ENCODE measurements at regions of chr12 and their contacts with region 1.

Region 1: GRCh38 chr12:6426882-6427671 is 17.7 kb upstream of the CD27 start:
- DNase-seq: no peak
- H3K4me3 ChIP-seq: no peak overlapping the region
- H3K27ac ChIP-seq: peak overlapping the region in 2 of 4 donors; percentile 38 to 47
- H3K4me1 ChIP-seq: peaks cover 20 to 30% (median 22%) of the 10 kb centered on the region in 3 donors
- H3K27me3 ChIP-seq: no peaks in the 10 kb centered on the region
- CTCF ChIP-seq: no peak
- POLR2A ChIP-seq: no peak

Region 2: GRCh38 chr12:6182116-6182898 is 244.8 kb before region 1 on chr12:
- intact Hi-C with region 1: no loop called
- DNase-seq: no peak
- H3K4me3 ChIP-seq: peak overlapping the region in 1 of 4 donors; percentile 27
- H3K27ac ChIP-seq: peak overlapping the region; percentile 82 to 91 (median 90)
- H3K4me1 ChIP-seq: peaks cover 33 to 75% (median 51%) of the 10 kb centered on the region in 3 donors
- H3K27me3 ChIP-seq: no peaks in the 10 kb centered on the region
- CTCF ChIP-seq: no peak
- POLR2A ChIP-seq: no peak

Region 3: DNA sequence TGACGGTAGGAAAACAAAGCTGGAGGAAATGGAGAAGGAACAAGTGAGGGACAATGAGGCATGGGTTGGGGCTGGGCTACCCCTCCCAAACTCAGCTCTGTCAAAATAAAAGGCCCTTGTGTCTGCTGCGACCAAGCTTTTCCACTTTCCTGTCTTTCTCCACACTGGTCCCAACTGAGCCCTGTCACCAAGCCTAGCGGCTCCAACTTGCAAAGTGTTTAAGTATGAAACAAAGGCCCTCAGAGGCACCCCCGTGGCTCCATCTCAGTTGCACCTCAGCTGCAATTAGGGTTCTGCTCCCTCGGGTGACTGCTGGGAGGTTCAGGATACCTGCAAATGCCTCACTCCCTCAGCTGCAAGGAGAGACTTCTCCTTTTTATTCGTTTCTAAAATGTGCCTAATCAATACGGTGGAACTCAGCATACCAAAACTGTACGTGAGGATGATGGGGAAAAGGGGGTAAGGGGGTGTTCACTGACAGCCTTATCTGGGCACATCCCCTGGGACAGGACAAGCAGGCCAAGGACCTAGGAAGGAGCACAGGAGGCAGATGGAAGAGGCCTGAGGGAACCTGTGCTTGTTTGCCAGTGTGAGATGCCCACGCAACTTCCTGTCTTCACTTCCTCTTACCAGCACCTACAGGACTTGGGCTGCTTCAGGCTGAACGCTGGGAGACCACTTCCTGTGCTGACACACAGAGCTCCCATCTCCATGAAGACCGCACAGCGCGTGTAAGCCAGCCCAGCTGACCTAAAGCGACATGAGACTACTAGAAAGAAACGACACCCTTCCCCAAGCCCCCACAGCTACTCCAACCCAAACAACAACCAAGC is 34.5 kb after region 1 on chr12:
- intact Hi-C with region 1: loop called (anchors 5 kb)
- DNase-seq: peak; percentile 65
- H3K4me3 ChIP-seq: no peak overlapping the region
- H3K27ac ChIP-seq: peak overlapping the region; percentile 1 to 81 (median 51)
- H3K4me1 ChIP-seq: peaks cover 0 to 55% (median 21%) of the 10 kb centered on the region in 3 donors
- H3K27me3 ChIP-seq: no peaks in the 10 kb centered on the region
- CTCF ChIP-seq: no peak
- POLR2A ChIP-seq: no peak

Region 4: GRCh38 chr12:6533923-6534694 is 107.0 kb after region 1 on chr12 and contains the start of gene GAPDH:
- intact Hi-C with region 1: loop called (anchors 5 kb)
- DNase-seq: peak; percentile 56
- H3K4me3 ChIP-seq: peak within 1 kb of the TSS; percentile 90 to 99 (median 92)
- H3K27ac ChIP-seq: peak within 1 kb of the TSS; percentile 94 to 99 (median 98)
- H3K4me1 ChIP-seq: peaks cover 37 to 71% (median 40%) of the 10 kb centered on the region in 3 donors
- H3K27me3 ChIP-seq: no peaks in the 10 kb centered on the region
- CTCF ChIP-seq: peak in 1 of 6 experiments; percentile 13
- POLR2A ChIP-seq: peak in 2 of 4 donors; percentile 95 to 96
- total RNA-seq, gene GAPDH: 2,526 to 4,151 (median 3,597) TPM